Cardiac septum (tissue), 1 donor: ENCODE measurements at regions of chr1 and their contacts with region 1.

Region 1: DNA sequence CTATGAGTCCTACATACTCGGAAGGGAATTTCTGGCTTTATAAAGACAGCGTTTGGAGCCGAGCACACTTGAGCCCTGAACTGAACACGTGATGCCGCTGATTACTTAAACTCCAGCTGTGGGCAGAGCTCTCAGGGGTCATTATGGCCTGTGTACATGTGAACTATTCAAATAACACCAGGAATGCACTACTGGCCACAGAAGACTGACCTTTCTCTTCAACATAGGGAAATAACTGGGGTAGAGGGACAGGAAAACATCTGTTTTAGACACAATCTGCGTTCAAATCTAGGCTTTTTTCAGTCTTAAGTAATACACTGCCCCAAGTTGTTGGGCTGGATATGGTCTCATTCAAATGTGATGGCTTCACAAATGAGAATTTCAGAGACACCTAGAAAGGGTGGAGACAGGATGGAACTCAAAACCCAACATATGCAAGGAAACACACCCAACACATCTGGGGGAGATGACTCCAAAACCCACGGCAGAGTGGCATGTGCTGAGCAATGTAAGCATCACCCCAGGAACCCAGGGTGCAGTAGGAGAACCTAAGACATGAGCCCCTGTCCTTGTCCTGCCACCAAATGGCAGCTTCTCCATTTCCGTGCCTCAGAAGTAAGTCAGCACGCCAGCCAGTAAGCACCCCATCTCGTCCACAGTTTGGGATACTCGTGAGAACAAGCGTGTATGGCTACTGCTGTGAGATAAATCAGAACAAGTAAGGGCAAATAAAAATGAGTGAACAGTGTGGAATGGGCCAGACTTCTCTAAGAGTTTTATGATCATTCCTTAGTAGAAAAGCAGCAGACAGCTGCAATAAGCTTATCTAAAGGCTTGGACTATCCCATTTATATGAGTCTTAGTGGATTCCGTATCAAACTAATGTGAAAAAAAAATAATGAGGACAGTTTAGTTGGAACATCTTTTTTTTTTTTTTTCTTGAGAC is 24.9 kb downstream of the NID1 start:
- DNase-seq: peak; percentile 66

Region 2: GRCh38 chr1:235286667-235287066 is 753.3 kb before region 1 on chr1:
- intact Hi-C with region 1: loop called (anchors 10 kb)
- DNase-seq: no peak